Heart right ventricle (tissue), 16 donors: ENCODE measurements at regions of chr9 and their contacts with region 1.

Region 1: GRCh38 chr9:2662496-2662895 is 40.9 kb downstream of the VLDLR start:
- DNase-seq: no peak
- ATAC-seq: peak in 3 of 8 donors; percentile 27 to 38 (median 38)
- H3K4me3 ChIP-seq: no peak overlapping the region
- H3K27ac ChIP-seq: peak overlapping the region in 9 of 10 donors; percentile 56 to 88 (median 73)
- H3K4me1 ChIP-seq: peaks cover 6 to 43% (median 35%) of the 10 kb centered on the region in 9 donors
- H3K27me3 ChIP-seq: no peaks in the 10 kb centered on the region
- CTCF ChIP-seq: peak in 3 of 9 donors; percentile 10 to 23 (median 17)

Region 2: DNA sequence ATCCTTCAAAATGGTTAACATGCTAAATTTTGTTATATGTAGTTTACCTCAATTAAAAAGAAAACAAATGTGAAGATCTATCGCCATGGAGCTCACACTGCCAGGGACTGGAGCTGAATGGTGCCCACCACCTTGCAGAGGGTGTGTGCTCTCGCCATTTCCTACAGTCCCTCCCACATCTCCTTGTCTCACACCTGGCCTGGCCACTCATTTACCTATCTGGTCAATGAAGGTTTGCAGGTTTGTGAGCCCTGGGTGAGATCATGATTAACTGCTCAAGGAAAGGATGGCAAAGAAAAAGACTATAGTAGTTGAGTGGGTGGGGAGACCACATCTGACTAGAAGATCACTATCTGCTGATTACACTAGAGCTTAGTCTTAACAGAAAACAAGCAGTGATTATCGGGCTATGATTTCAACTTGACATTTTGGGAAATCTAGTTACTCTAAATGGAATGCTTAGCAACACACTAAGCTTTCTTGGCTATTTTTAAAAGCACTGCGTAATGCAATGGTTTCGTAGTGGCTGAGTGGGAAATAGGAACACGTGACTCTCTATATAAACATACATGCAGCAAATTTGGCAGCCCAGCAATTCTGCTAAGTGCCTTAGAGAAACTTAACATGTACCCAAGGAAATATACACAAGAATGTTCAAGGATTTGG is 154.1 kb after region 1 on chr9:
- intact Hi-C with region 1: loop called in 1 of 10 experiments (anchors 5 kb)
- DNase-seq: peak in 1 of 2 donors; percentile 41
- ATAC-seq: peak; percentile 63 to 89 (median 82)
- H3K4me3 ChIP-seq: no peak overlapping the region
- H3K27ac ChIP-seq: peak overlapping the region in 9 of 10 donors; percentile 13 to 86 (median 77)
- H3K4me1 ChIP-seq: peaks cover 2 to 31% (median 18%) of the 10 kb centered on the region in 9 donors
- H3K27me3 ChIP-seq: no peaks in the 10 kb centered on the region
- CTCF ChIP-seq: no peak